Psoas muscle (tissue), 8 donors: ENCODE measurements at regions of chr17 and their contacts with region 1.

Region 1: GRCh38 chr17:42527273-42527703 is 8.8 kb upstream of the NAGLU start:
- DNase-seq: peak; percentile 69 to 78
- ATAC-seq: peak; percentile 74 to 82 (median 76)
- H3K4me3 ChIP-seq: no peak overlapping the region
- H3K27ac ChIP-seq: peak overlapping the region; percentile 51
- H3K4me1 ChIP-seq: peaks cover 36% of the 10 kb centered on the region
- H3K27me3 ChIP-seq: no peaks in the 10 kb centered on the region
- CTCF ChIP-seq: peak; percentile 84

Region 2: DNA sequence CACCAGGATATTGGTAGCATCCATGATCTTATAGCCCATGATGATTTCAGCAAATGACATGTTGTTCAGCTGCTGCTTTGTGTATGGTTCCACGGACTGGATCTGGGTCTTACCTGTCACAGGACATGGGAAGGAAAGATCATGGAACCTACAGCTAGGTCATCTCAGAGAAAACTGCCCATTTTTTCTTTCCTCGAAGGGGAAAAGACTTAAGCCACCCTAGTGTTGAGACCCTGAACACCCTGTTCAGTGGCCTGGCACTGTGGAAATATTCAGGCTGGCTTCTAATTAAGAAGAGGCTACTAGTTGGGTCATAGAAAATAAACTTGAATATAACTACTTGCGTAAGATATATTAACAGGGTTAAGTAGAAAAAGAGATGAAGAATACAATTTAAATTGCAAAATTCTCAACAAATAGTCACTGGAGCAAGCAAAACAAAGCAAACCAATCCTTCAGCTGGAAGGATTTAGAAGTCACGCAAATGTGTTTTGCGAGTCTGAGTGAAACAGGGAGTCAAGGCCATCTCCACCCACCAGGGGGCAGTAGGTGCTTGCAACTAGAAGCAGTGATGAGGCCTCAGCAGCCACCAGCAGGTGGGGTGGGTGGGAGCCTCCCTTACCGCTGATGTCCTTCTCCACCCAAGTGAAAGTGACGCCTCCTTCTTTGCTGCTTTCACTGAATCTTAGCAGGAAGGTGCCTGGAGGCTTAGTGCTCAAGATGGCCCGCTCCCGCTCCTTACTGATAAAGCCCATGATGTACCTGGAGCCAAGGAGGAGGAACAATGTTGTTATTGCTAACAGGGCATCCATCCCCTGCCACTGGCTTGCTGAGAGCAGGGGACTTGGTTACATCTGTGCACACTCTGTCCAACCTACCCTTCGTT is 204.7 kb before region 1 on chr17:
- intact Hi-C with region 1: loop called in 1 of 2 experiments (anchors 5 kb)
- DNase-seq: peak; percentile 91 to 96
- ATAC-seq: peak; percentile 82 to 91 (median 86)
- H3K4me3 ChIP-seq: no peak overlapping the region
- H3K27ac ChIP-seq: no peak overlapping the region
- H3K4me1 ChIP-seq: peaks cover 5% of the 10 kb centered on the region
- H3K27me3 ChIP-seq: no peaks in the 10 kb centered on the region
- CTCF ChIP-seq: peak; percentile 99

Region 3: GRCh38 chr17:42337442-42337841 is 189.8 kb before region 1 on chr17:
- intact Hi-C with region 1: no loop called
- DNase-seq: no peak
- ATAC-seq: no peak
- H3K4me3 ChIP-seq: no peak overlapping the region
- H3K27ac ChIP-seq: no peak overlapping the region
- H3K4me1 ChIP-seq: no peaks in the 10 kb centered on the region
- H3K27me3 ChIP-seq: no peaks in the 10 kb centered on the region
- CTCF ChIP-seq: no peak

Region 4: DNA sequence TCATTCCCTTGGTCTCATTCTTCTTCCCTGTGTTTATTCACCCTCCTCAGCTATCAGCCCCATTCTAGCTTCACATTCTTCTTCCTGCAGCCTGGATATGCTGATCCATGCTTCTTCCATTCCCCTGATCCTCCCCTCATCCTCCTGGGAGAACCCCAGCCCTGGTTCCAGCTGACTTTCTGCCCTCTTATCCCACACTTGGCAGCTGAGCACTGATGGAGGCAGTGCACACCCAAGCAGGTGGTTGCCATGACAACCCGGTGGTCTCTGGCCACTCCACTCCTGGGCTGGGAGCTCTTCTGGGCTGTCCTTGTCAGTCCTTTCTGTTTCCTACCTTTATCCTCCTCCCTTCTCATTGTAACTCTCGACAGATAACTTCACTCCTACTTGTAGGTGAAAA is 115.0 kb after region 1 on chr17:
- intact Hi-C with region 1: no loop called
- DNase-seq: no peak
- ATAC-seq: no peak
- H3K4me3 ChIP-seq: no peak overlapping the region
- H3K27ac ChIP-seq: no peak overlapping the region
- H3K4me1 ChIP-seq: no peaks in the 10 kb centered on the region
- H3K27me3 ChIP-seq: no peaks in the 10 kb centered on the region
- CTCF ChIP-seq: no peak